Psoas muscle (tissue), 8 donors: ENCODE measurements at regions of chr14 and their contacts with region 1.

Region 1: GRCh38 chr14:78220273-78220672 is 50.1 kb downstream of the NRXN3 start:
- DNase-seq: no peak
- ATAC-seq: no peak
- H3K4me3 ChIP-seq: no peak overlapping the region
- H3K27ac ChIP-seq: no peak overlapping the region
- H3K4me1 ChIP-seq: no peaks in the 10 kb centered on the region
- H3K27me3 ChIP-seq: no peaks in the 10 kb centered on the region
- CTCF ChIP-seq: no peak

Region 2: DNA sequence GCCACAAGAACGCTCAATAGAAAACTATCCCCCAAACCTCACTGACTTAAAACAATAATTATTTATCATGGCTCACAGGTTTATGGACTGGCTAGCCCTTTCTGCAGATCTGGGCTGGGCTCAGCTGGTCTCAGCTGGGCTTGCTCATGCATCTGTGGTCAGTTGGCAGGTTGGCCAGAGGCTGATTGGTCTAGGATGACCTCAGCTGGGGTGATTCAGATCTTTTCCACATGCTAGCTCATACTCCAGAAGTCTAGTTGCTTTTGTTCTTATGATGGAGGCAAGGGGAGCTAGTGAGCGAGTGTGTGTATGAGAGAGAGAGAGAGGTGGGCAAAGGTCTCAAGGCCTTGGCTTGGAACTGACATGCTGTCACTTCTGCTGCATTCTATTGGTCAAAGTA is 231.3 kb before region 1 on chr14:
- intact Hi-C with region 1: loop called in 1 of 2 experiments (anchors 5 kb)
- DNase-seq: peak; percentile 50 to 58
- ATAC-seq: peak; percentile 46 to 70 (median 66)
- H3K4me3 ChIP-seq: no peak overlapping the region
- H3K27ac ChIP-seq: no peak overlapping the region
- H3K4me1 ChIP-seq: no peaks in the 10 kb centered on the region
- H3K27me3 ChIP-seq: no peaks in the 10 kb centered on the region
- CTCF ChIP-seq: no peak

Region 3: GRCh38 chr14:78259831-78260230 is 39.6 kb after region 1 on chr14:
- intact Hi-C with region 1: no loop called
- DNase-seq: no peak
- ATAC-seq: no peak
- H3K4me3 ChIP-seq: no peak overlapping the region
- H3K27ac ChIP-seq: no peak overlapping the region
- H3K4me1 ChIP-seq: no peaks in the 10 kb centered on the region
- H3K27me3 ChIP-seq: peaks cover 0 to 3% (median 0%) of the 10 kb centered on the region in 3 donors
- CTCF ChIP-seq: no peak

Region 4: DNA sequence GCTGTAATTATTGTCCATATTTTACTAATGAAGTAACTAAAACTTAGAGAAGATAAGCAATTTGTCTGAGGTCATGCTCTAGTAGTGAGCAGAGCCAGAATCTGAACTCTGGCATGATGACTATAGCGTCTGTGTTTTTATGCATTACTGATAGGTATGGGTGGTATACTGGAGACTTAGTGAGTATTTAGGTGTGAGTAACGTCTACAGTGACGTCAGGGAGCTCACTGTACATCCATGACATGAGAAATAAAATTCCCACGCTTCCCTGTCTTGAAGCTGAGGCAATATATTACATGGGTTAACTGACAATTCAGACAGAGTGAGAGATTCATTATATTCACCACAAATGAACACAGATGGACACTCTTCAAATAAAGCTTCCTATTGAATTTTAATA is 671.0 kb after region 1 on chr14:
- intact Hi-C with region 1: no loop called
- DNase-seq: no peak
- ATAC-seq: no peak
- H3K4me3 ChIP-seq: no peak overlapping the region
- H3K27ac ChIP-seq: no peak overlapping the region
- H3K4me1 ChIP-seq: no peaks in the 10 kb centered on the region
- H3K27me3 ChIP-seq: no peaks in the 10 kb centered on the region
- CTCF ChIP-seq: no peak